Naive thymus-derived CD8-positive, alpha-beta T cell (primary cell): ENCODE measurements at regions of chr1 and their contacts with region 1.

Region 1: GRCh38 chr1:198620951-198621824 is 17.7 kb upstream of the PTPRC start:
- DNase-seq: peak; percentile 35 to 83 (median 62)
- ATAC-seq: peak; percentile 73 to 82
- H3K4me3 Mint-ChIP-seq: peak overlapping the region; percentile 76 to 94 (median 82)
- H3K27ac Mint-ChIP-seq: peak overlapping the region; percentile 91 to 98 (median 96)
- H3K4me1 Mint-ChIP-seq: peaks cover 42 to 96% (median 80%) of the 10 kb centered on the region in 4 donors
- H3K27me3 Mint-ChIP-seq: no peaks in the 10 kb centered on the region

Region 2: DNA sequence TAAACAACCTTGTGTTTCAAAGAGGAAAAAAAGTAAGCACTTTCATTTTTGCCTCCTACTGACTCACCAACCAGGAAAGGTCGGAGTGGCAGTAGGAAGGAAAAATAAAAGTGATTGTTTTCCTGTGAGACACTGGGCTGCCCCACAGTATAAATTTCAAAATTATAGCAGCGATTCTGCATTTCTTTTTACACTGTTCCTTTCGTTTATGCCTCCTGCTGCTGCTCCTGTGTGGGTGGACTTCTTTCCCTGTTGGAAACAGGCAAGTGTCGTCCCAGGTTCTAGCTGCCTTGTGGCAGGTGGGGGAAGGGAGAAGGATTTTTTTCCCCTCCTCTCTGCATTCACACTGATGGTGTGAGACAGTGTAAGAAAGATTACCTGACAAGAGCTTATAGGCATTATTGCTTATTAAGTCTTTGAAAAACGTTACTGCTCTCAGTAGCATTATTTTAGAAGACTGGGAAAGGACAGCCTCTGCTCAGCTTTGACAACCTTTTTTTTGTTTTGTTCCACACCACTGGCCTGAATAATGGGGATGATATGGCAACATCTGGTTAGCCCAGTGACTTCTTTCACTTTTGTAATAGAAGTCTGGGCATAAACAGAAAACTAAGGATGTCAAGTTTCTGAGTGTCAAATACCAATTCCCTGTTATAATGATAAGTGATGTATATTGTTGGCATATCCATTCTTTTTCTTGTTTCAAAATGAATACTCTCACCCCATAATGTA is 386.5 kb before region 1 on chr1:
- POLR2A ChIA-PET with region 1: no interaction called
- DNase-seq: no peak
- ATAC-seq: no peak
- H3K4me3 Mint-ChIP-seq: peak overlapping the region in 1 of 10 donors; percentile 4
- H3K27ac Mint-ChIP-seq: peak overlapping the region in 2 of 10 donors; percentile 27 to 61
- H3K4me1 Mint-ChIP-seq: peaks cover 7 to 46% (median 27%) of the 10 kb centered on the region in 4 donors
- H3K27me3 Mint-ChIP-seq: no peaks in the 10 kb centered on the region

Region 3: DNA sequence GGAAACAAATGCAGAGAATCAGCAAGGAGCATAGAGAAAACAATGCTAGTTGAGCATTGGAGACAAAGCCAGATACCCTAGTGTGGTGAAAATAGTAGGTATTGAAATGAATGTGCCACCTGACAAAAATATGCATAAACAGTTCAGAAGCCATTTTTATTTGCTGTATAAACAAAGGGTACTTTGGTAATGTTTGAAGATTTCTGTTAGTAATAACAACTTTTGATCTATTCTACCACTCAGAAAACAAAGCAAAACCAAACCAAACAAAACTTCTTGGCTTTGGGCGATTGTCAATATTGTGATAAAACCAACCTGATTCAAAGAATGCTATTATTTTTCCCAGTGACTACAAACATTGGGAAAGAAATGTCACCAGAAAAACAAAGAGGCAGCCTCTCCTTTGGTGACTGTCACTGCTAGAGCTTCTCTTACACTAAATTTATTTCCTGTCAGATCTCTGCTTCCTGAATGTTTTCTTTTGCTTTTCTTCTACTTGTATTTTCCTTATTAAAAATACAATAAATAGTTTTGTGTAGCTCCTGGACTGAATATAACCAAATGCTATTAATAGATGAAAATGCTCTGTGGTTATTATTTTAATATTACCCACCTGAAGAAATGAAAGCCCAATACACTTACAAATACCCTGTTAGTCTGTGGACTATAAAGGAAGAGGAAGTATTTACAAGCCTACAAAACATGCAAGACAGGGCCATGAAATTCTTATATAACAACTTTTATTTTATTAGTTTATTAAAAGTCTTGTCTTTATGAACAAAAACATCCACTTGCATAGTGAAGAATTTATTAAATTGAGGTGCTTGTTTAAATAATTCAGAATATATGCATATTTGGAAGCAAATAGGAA is 86.4 kb before region 1 on chr1:
- POLR2A ChIA-PET with region 1: interaction called, 10 read pairs
- DNase-seq: peak in 1 of 10 donors; percentile 28
- ATAC-seq: peak; percentile 38 to 52
- H3K4me3 Mint-ChIP-seq: peak overlapping the region; percentile 51 to 83 (median 74)
- H3K27ac Mint-ChIP-seq: peak overlapping the region; percentile 90 to 99 (median 94)
- H3K4me1 Mint-ChIP-seq: peaks cover 35 to 85% (median 79%) of the 10 kb centered on the region in 4 donors
- H3K27me3 Mint-ChIP-seq: no peaks in the 10 kb centered on the region

Region 4: DNA sequence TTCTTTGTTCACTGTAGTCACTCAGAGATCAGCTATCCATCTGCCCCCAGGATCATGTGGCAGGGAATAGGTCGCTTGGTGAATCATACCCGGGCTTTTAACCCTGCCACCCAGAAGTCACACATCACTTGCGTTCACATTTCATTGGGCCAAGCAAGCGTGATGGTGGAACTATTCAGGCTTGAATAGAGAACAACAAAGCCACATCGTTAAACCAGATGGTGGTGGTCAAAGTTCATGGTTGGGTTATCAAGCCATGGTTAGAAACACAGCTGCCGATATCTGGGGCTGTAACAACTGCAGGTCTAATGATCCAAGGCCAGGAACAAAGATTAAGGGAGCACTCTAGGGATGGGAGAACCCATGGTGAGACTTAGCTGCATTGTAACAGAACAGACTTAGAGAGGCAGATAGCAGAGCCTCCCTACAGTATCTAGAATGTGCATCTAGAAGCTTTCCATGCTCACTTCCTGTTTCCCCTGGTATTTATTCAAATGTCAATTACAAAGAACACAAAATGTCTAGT is 22.3 kb before region 1 on chr1:
- POLR2A ChIA-PET with region 1: interaction called, 59 read pairs
- DNase-seq: no peak
- ATAC-seq: peak; percentile 58 to 61
- H3K4me3 Mint-ChIP-seq: peak overlapping the region in 9 of 10 donors; percentile 34 to 88 (median 58)
- H3K27ac Mint-ChIP-seq: peak overlapping the region in 9 of 10 donors; percentile 63 to 99 (median 94)
- H3K4me1 Mint-ChIP-seq: peaks cover 39 to 89% (median 81%) of the 10 kb centered on the region in 4 donors
- H3K27me3 Mint-ChIP-seq: no peaks in the 10 kb centered on the region

Region 5: DNA sequence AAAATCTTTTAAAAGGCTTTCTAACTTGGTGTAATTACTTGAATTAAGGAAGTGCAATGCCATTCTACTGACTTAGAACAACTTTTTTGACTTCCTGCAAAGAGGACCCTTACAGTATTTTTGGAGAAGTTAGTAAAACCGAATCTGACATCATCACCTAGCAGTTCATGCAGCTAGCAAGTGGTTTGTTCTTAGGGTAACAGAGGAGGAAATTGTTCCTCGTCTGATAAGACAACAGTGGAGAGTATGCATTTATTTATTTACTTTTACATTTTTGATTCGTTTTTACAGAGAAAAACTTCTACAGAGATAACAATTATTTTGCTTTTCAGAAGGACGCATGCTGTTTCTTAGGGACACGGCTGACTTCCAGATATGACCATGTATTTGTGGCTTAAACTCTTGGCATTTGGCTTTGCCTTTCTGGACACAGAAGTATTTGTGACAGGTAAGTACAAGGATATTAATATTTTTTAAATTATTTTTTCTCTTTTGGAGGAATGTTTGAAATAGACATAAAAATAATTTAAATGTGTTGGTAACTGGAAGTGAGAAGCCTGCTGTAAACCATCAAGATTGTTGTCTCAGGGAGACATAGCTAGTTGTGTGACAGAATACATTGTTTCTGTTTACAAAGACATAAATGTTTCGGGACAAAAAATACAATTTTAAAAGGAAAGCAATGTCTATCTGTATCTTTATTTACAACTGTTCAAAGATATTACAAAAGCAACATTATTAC is 17.9 kb after region 1 on chr1 and contains the start of gene PTPRC:
- POLR2A ChIA-PET with region 1: interaction called, 178 read pairs
- DNase-seq: peak in 5 of 10 donors; percentile 51 to 76 (median 61)
- ATAC-seq: peak; percentile 70 to 83
- H3K4me3 Mint-ChIP-seq: peak within 1 kb of the TSS; percentile 84 to 99 (median 90)
- H3K27ac Mint-ChIP-seq: peak within 1 kb of the TSS; percentile 87 to 99 (median 92)
- H3K4me1 Mint-ChIP-seq: peaks cover 34 to 67% (median 50%) of the 10 kb centered on the region in 4 donors
- H3K27me3 Mint-ChIP-seq: no peaks in the 10 kb centered on the region
- polyA plus RNA-seq, gene PTPRC: 980 to 1,253 (median 1,023) TPM

Region 6: GRCh38 chr1:198657550-198658064 is 36.4 kb after region 1 on chr1:
- POLR2A ChIA-PET with region 1: interaction called, 36 read pairs
- DNase-seq: peak in 6 of 10 donors; percentile 24 to 72 (median 49)
- ATAC-seq: peak; percentile 30 to 59
- H3K4me3 Mint-ChIP-seq: peak overlapping the region; percentile 61 to 85 (median 79)
- H3K27ac Mint-ChIP-seq: peak overlapping the region; percentile 83 to 99 (median 97)
- H3K4me1 Mint-ChIP-seq: peaks cover 29 to 79% (median 56%) of the 10 kb centered on the region in 4 donors
- H3K27me3 Mint-ChIP-seq: no peaks in the 10 kb centered on the region

Region 7: DNA sequence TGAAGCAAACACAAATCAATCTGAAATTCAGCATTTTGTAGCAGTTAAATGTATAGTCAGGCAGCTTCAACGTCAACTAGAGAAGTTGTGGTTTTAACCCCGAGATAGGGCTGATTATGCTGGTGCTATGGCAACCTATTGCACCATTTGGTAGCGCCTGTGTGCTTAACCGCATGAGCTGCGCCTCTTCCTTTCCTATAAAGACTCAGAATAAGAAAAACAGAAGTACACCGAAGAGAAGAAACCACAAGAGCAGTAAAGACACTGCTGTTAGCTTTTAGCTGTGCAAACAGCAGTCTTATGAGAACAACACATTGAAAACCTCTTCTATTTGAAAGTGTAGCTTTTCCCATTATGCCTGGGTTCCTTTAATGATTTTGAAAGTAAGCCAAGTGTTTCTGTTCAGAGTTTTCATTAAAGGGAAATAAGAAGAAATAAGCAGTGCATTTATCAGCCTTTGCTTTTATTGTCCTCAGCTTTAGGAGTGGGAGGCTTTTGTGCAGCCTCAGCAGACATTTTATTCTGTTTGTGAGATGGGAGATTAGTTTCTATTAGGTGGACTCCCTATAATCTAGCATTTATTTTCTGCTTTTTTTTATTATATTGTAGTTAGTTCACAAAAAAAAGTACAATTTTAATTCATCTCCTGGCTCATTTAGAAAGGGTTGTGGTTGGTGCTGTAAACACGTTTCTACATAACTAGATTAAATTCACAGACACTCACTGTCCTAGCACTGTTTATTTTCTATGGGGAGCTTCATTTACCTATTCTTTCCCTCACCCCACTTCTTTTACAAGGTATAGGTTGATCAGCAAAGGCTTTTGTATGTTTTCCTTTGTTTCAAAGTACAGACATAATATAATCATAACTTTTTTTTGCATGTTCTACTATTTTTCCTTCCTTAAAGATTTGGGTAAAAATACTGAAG is 60.9 kb after region 1 on chr1:
- POLR2A ChIA-PET with region 1: interaction called, 110 read pairs
- DNase-seq: peak; percentile 48 to 96 (median 84)
- ATAC-seq: peak; percentile 72 to 81
- H3K4me3 Mint-ChIP-seq: peak overlapping the region; percentile 65 to 85 (median 80)
- H3K27ac Mint-ChIP-seq: peak overlapping the region; percentile 95 to 100 (median 99)
- H3K4me1 Mint-ChIP-seq: peaks cover 28 to 94% (median 75%) of the 10 kb centered on the region in 4 donors
- H3K27me3 Mint-ChIP-seq: no peaks in the 10 kb centered on the region

Region 8: DNA sequence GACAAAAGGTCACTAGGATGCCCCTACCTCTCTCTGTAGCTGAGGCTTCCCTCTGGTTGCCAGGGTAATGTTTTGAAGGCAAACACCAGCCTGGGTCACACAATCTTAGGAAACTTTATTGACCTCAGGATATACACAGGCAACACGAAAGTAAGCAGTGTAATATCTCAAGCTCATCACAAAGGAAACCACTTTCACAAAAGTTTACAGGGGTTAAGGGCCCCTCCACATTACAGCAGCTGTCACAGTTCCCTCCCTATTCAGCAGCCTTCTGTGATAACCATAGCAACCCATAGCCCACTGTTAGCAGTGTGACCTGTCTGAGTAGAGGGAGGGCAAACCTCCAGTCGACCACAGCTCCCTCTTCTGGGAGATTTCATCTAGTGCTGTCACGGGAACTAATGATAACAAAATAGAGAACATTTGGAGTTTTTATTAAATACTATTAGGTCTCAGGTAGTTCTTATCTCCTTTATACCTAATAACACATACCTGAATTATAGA is 167.4 kb after region 1 on chr1:
- POLR2A ChIA-PET with region 1: no interaction called
- DNase-seq: peak in 4 of 10 donors; percentile 10 to 28 (median 16)
- ATAC-seq: peak; percentile 76 to 94
- H3K4me3 Mint-ChIP-seq: no peak overlapping the region
- H3K27ac Mint-ChIP-seq: peak overlapping the region in 3 of 10 donors; percentile 19 to 86 (median 55)
- H3K4me1 Mint-ChIP-seq: peaks cover 2 to 15% (median 11%) of the 10 kb centered on the region in 4 donors
- H3K27me3 Mint-ChIP-seq: no peaks in the 10 kb centered on the region